AG04449 (cell line): ENCODE measurements at regions of chr4 and their contacts with region 1.

Region 1: DNA sequence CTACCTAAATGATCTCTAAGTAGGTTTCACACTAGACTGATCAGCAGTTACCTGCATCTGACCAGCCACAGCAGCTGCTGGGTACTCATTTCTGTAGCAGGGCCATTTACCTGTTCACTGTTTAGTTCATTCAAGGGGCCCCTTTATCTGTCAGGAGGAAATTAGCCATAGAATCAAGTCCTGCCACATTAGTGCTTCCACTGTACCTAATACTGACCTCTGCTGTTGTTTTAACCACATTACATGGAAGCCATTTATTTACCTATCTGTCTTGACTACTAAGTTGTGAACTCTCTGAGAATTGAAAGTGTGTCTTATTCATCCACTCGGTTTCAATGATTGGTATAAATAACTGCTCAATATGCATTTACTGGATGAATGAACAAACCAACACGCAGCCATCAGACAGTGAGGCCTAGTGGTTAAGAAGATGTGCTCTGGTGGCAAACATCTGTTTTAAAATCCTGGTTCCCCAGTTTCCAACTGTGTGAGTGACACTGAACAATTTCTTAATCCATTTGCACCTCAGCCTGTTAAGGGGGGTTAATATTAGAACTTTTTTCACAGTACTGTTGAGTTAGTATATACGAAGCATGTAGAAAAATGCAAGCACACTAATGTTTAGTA is 30.0 kb upstream of the ANXA5 start:
- DNase-seq: no peak
- H3K4me3 ChIP-seq: no peak overlapping the region
- CTCF ChIP-seq: peak; percentile 51

Region 2: DNA sequence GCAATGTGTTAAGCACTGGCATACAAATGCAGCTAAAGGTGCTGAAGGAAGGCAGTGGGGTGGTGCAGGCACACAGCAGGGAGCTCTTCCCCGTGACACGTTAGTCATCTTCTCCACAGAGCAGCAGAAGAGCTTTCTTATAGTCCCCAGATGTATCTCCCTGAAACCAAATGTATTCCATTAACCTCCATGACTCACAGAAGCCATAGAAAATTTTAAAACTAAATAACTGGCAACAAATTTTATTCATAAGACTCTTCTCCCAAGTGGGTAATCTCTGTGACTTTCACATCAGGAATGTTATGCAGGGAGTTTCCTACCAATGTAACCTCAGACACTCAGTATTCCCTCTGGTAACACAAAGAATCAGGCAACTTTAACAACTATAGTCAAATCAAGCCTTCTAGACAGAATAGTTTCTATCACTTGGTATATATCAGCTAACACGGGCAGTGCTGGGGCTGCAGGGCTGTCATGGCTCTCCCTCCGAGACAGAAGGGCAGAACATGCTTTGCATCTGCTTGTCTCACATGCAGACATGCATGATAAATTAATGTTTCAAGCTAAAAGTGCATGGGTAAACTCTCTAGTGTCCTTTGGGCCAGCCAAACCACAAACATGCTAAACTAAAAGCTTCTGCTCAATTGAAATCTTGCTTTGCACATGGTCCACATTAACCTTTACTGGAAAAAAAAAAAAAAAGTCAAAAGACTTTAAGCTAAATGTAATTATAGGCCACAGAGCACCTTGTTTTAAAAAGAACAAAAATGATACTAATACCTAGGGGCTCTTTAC is 58.2 kb before region 1 on chr4:
- CTCF ChIA-PET with region 1: interaction called, 9 read pairs
- POLR2A ChIA-PET with region 1: interaction called, 10 read pairs
- DNase-seq: peak; percentile 95
- H3K4me3 ChIP-seq: no peak overlapping the region
- CTCF ChIP-seq: no peak

Region 3: GRCh38 chr4:121711263-121712000 is 15.3 kb before region 1 on chr4:
- CTCF ChIA-PET with region 1: interaction called, 31 read pairs
- POLR2A ChIA-PET with region 1: no interaction called
- DNase-seq: peak; percentile 81
- H3K4me3 ChIP-seq: peak overlapping the region; percentile 46
- CTCF ChIP-seq: no peak

Region 4: DNA sequence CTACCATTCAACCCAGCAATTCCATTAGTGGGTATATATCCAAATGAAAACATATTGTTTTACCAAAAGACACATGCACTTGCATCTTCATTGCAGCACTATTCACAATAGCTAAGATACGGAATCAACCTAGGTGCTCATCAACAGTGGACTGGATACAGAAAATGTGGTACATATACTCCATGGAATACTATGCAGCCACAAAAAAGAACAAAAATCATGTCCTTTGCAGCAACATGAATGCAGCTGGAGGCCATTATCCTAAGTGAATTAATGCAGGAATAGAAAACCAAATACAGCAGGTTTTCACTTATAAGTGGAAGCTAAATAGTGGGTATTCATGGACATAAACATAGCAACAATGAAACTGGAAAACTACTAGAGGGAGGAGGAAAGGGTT is 181.6 kb after region 1 on chr4:
- CTCF ChIA-PET with region 1: no interaction called
- POLR2A ChIA-PET with region 1: no interaction called
- DNase-seq: no peak
- H3K4me3 ChIP-seq: no peak overlapping the region
- CTCF ChIP-seq: no peak